B cell (primary cell): ENCODE measurements at regions of chr22 and their contacts with region 1.

Region 1: DNA sequence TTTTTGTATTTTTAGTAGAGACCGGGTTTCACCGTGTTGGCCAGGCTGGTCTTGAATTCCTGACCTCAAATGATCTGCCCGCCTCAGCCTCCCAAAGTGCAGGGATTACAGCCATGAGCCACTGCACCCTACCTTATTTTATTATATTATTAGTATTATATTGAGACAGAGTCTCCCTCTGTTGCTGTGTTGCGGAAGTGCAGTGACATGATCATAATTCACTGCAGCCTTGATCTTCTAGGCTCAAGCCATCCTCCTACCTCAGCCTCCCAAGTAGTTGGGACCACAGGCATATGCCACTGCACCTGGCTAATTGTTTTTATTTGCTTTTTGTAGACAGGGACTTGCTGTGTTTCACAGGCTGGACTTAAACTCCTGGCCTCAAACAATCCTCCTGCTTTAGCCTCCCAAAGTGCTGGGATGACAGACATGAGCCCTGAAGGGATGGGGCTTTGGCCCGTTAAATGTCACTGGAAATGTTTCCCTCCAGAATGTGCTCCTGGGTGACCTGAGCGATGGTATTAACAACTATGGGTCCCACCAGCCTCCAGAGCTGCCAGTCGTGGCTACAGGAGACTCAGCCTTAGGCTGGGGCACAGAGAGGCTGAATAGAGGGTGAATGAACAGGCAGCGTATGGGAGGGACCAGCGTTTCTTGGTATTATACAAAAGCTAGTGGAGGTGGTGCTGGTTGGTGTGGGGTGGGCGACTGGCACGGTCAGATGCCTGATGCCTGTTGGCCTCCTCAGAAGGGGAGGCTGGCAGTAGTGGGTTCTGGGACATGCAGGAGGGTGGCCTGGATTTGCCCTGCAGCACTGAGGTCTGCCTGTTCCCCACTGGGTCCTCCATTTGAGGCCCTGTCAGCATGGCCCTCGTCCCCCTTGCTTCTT is 7.3 kb downstream of the TANGO2 start:
- DNase-seq: peak; percentile 16
- ATAC-seq: no peak
- H3K4me3 ChIP-seq: no peak overlapping the region
- H3K4me3 Mint-ChIP-seq: no peak overlapping the region
- H3K27ac ChIP-seq: no peak overlapping the region
- H3K27ac Mint-ChIP-seq: peak overlapping the region; percentile 46
- H3K4me1 ChIP-seq: peaks cover 21 to 34% of the 10 kb centered on the region in 2 donors
- H3K4me1 Mint-ChIP-seq: peaks cover 56% of the 10 kb centered on the region
- H3K27me3 ChIP-seq: no peaks in the 10 kb centered on the region
- H3K27me3 Mint-ChIP-seq: no peaks in the 10 kb centered on the region
- CTCF ChIP-seq: peak; percentile 34

Region 2: DNA sequence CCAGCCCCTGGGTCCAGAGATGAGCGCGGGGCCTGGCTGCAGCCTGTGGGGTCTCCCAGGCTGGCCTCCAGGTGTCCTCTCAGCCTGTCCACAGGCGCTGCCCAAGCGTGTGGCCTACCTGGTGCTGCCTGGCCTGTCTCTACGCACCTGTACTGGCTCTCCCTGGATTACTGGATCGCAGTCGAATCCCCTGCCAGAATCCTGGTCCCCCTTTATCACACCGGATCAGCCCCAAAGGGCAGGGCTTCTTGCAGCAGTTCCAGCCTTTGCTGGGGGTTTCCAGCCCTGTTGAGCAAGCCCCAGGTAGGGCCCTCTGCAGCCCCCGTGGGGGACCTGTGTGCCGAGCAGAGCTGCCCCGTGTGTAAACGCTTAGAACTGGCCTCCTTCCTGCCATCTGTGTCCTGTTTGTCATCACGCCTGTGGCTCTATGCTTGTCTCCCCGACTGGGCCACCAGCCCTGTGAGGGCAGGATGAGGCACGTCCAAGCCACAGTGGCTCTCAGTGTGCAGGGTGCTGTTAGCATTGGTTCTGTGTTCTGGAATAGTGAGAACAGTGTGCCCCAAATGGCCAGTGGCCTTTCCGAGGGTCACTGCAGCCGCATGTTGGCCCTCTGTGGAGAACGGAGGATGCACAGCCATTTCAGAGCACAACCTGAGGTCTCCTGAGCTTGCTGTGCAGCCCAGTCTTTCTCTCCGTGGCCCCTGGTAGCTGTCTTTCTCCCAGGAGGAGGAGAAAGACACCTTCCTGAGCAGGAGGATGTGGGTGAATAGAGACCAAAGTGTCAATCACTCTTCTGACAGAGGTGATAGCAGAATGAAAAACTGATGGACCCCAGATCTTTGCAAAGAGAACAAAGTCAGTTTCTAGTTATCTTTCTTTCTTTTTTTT is 72.7 kb before region 1 on chr22:
- CTCF ChIA-PET with region 1: no interaction called
- POLR2A ChIA-PET with region 1: interaction called, 11 read pairs
- intact Hi-C with region 1: no loop called
- DNase-seq: no peak
- ATAC-seq: no peak
- H3K4me3 ChIP-seq: no peak overlapping the region
- H3K4me3 Mint-ChIP-seq: no peak overlapping the region
- H3K27ac ChIP-seq: no peak overlapping the region
- H3K27ac Mint-ChIP-seq: no peak overlapping the region
- H3K4me1 ChIP-seq: no peaks in the 10 kb centered on the region
- H3K4me1 Mint-ChIP-seq: peaks cover 22% of the 10 kb centered on the region
- H3K27me3 ChIP-seq: no peaks in the 10 kb centered on the region
- H3K27me3 Mint-ChIP-seq: no peaks in the 10 kb centered on the region
- CTCF ChIP-seq: no peak